ENCODE measurements at regions of chr6 and their contacts with region 1.

Region 1: GRCh38 chr6:34248727-34249551 is at the start of gene SMIM29:
- DNase-seq: peak; percentile 97
- CTCF ChIP-seq: peak; percentile 74

Region 2: GRCh38 chr6:33958526-33959333 is 290.2 kb before region 1 on chr6:
- CTCF ChIA-PET with region 1: no interaction called
- POLR2A ChIA-PET with region 1: no interaction called
- DNase-seq: no peak
- CTCF ChIP-seq: peak; percentile 26

Region 3: GRCh38 chr6:34196126-34196830 is 52.7 kb before region 1 on chr6:
- CTCF ChIA-PET with region 1: interaction called, 24 read pairs
- POLR2A ChIA-PET with region 1: no interaction called
- DNase-seq: peak; percentile 93
- CTCF ChIP-seq: peak; percentile 98

Region 4: GRCh38 chr6:34273242-34273805 is 24.4 kb after region 1 on chr6:
- CTCF ChIA-PET with region 1: interaction called, 11 read pairs
- POLR2A ChIA-PET with region 1: no interaction called
- DNase-seq: peak; percentile 42
- CTCF ChIP-seq: no peak

Region 5: DNA sequence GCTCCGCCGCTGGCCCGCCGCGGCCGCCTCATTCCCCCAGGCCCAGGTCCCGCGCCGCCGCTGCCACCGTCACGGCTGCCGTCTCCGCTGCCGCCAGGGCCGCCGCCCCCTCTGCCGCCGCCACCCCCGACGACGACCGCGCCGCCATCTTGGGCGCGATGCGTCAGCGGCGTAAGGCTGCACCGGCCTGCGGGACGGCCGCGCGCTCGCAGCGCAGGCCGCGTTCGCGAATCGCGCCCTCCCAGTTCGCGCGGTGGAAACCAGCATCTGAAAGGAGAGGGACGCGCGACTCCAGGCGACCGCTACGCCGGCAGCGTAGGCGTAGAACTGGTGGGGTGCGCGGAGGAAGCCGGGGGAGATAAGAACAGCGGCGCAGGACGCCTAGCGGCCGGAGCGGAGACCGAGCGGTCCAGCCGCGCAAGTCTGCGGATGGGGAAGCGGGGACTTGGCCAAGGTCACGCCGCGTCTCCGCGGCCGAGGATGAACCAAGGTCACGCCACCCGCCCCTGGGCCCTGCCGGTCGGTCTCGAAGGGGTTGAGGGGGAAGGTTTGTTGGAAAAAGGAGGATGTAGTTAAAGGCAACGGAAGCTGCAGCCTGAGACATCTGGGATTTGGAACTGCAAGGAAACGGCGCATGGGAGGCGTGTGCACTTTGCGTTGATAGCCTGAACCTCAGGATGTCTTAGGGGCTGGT is 143.7 kb after region 1 on chr6 and contains the start of gene NUDT3:
- CTCF ChIA-PET with region 1: interaction called, 40 read pairs
- POLR2A ChIA-PET with region 1: no interaction called
- DNase-seq: peak; percentile 94
- CTCF ChIP-seq: peak; percentile 85

Region 6: GRCh38 chr6:34476447-34476846 is 227.5 kb after region 1 on chr6:
- CTCF ChIA-PET with region 1: no interaction called
- POLR2A ChIA-PET with region 1: no interaction called
- DNase-seq: no peak
- CTCF ChIP-seq: no peak

Region 7: DNA sequence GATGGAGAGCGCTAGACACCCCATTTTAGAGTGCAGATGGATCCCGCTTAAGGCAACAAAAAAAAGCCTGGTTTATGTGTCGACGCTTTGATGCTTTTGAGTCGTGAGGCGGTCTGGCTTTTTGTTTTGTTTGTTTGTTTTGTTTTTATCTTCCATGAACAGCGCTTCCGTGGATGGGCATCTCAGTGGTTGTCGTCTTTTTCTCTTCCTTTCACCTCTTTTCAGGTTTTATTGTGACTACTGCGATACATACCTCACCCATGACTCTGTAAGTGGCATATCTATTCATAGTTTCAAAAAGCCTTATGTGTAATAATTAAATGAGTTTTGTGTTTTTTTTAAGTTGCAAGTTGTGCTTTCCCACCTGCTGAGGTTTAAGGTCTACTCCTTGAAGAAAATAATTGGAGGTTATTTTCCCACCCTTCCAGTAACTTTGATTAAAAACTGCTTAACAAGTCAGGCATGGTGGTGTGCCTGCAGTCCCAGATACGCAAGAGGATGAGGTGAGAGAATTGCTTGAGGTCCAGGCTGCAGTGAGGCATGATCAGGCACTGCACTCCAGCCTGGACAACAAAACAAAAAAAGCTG is 508.8 kb after region 1 on chr6:
- CTCF ChIA-PET with region 1: no interaction called
- POLR2A ChIA-PET with region 1: no interaction called
- DNase-seq: no peak
- CTCF ChIP-seq: no peak

Measured in GM10248 (cell line).